Activated CD4-positive, alpha-beta T cell treated with anti-CD3 and anti-CD28 coated beads for 36 hours (primary cell): ENCODE measurements at regions of chr15 and their contacts with region 1.

Region 1: GRCh38 chr15:41917767-41918430 is 24.0 kb upstream of the SPTBN5 start:
- DNase-seq: no peak
- ATAC-seq: no peak
- H3K4me3 Mint-ChIP-seq: no peak overlapping the region
- H3K27ac Mint-ChIP-seq: no peak overlapping the region
- H3K4me1 Mint-ChIP-seq: peaks cover 7% of the 10 kb centered on the region
- H3K27me3 Mint-ChIP-seq: no peaks in the 10 kb centered on the region

Region 2: DNA sequence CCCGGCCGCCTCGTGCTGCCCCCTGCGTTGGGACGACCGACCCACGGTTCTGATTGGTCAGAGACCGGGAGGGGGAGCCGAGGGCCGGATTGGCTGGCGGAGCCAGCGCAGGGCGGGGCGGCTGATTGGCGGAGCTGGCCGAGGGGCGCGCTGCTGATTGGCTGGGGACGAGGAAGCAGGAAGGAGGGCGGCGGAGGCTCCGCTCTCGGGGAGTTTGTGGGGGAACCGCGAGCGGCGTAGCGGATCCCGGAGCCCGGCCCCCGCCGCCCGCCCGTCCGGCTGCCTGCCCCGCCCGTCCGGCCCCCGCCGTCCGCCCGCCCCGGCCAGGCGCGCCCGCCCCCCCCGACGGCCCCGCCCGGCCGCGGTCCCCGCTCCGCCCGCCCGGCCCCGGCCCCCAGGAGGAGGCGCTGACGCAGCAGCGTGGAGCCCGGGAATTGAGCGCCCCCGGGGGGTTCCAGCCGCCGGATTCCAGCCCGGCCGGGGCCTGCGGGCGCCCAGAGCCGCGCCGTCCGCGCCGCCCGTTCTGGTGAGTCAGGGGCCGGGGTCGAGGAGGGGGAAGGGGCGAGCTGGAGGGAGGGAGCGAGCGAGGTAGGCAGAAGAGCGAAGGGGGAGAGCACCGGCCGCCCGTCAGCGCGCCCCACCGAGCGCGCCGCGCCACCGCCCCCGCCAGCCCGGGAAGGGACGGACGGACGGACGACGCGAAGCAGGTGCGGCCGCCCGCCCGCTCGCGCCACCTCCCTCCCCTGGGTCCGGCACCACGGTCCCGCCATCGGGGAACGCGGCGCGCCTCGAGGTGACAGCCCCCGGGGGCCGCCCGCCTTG is 1476.9 kb before region 1 on chr15 and contains the start of gene BAHD1:
- CTCF ChIA-PET with region 1: no interaction called
- POLR2A ChIA-PET with region 1: no interaction called
- intact Hi-C with region 1: no loop called
- DNase-seq: peak; percentile 97
- ATAC-seq: peak; percentile 92
- H3K4me3 Mint-ChIP-seq: peak within 1 kb of the TSS; percentile 82
- H3K27ac Mint-ChIP-seq: peak within 1 kb of the TSS; percentile 75
- H3K4me1 Mint-ChIP-seq: peaks cover 56% of the 10 kb centered on the region
- H3K27me3 Mint-ChIP-seq: peaks cover 29% of the 10 kb centered on the region
- total RNA-seq, gene BAHD1: 15.3 to 16.7 TPM

Region 3: DNA sequence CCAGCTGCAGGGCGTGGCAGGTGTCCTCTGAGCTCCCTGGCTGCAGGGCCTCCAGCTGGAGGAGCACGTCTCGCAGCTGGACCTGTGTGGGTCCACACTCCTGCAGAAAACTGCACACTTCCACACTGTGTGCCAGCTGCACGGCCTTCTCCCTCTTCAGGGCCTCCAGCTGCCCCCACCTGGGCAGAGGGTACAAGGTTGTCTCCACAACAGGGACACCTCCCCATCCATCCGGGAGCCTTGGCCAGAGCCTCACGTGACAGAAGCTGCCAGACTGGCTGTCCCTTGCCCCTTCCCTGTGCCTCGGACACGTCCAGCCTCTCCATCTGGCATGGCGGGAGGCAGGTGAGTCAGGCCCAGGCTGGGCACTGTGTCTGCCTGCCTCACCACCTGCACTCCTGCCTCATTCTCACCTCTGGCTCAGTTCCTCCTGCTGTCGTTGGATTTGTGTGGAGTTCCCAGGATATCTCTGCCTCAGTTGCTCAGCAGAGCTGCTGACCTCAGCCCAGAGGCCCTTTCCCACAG is 38.5 kb before region 1 on chr15:
- CTCF ChIA-PET with region 1: no interaction called
- POLR2A ChIA-PET with region 1: no interaction called
- intact Hi-C with region 1: no loop called
- DNase-seq: no peak
- ATAC-seq: no peak
- H3K4me3 Mint-ChIP-seq: no peak overlapping the region
- H3K27ac Mint-ChIP-seq: no peak overlapping the region
- H3K4me1 Mint-ChIP-seq: peaks cover 4% of the 10 kb centered on the region
- H3K27me3 Mint-ChIP-seq: peaks cover 7% of the 10 kb centered on the region

Region 4: GRCh38 chr15:41904541-41905005 is 13.3 kb before region 1 on chr15:
- CTCF ChIA-PET with region 1: interaction called, 16 read pairs
- POLR2A ChIA-PET with region 1: no interaction called
- intact Hi-C with region 1: no loop called
- DNase-seq: peak; percentile 81
- ATAC-seq: peak; percentile 92
- H3K4me3 Mint-ChIP-seq: no peak overlapping the region
- H3K27ac Mint-ChIP-seq: peak overlapping the region; percentile 4
- H3K4me1 Mint-ChIP-seq: peaks cover 5% of the 10 kb centered on the region
- H3K27me3 Mint-ChIP-seq: no peaks in the 10 kb centered on the region